A549 (cell line): ENCODE measurements at regions of chr1 and their contacts with region 1.

Region 1: DNA sequence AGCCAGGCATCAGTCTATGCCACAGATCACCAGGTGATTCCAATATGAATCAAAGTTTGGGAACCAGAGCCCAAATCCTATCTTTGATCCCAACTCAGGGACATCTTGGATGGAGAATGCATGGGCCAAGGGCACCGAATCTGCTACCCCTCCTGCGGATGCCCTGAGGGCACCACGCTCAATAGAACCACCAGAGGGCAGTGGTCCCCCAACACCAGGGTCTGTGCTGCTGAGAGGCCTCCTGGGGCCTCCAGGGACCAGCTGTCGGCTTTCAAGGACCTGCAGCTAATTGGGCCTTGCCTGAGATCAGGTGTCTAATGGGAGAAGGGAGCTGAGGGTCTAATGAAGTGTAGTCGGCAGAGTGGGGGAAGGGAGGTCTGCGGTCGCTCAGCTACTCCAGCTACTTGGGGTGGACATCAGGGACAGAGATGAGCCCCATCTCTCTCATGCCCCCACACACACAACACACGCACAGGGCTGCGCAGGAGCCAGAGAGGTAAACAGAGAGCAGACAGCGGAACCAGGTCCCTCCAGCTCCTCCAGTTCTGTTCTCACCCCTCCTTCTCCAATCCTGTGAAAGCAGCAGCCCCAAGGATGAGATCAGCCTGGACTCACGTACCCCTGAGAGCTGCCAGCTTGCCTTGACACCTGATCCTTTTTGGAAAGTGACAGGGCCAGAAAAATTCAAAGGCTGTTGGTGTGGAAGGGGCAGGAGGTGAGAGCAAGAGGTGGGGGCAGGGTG is 34.9 kb upstream of the PPP1R15B start:
- DNase-seq: peak; percentile 59 to 81
- ATAC-seq: peak; percentile 86 to 88
- H3K4me3 ChIP-seq: no peak overlapping the region
- H3K27ac ChIP-seq: no peak overlapping the region
- H3K4me1 ChIP-seq: peaks cover 41% of the 10 kb centered on the region
- CTCF ChIP-seq: peak; percentile 57
- EP300 ChIP-seq: no peak
- POLR2A ChIP-seq: no peak
- RAD21 ChIP-seq: peak; percentile 66 to 71

Region 2: GRCh38 chr1:204417231-204417997 is 29.1 kb before region 1 on chr1:
- CTCF ChIA-PET with region 1: interaction called, 18 read pairs
- POLR2A ChIA-PET with region 1: interaction called, 5 read pairs
- DNase-seq: peak; percentile 94 to 97
- ATAC-seq: peak; percentile 91 to 96
- H3K4me3 ChIP-seq: peak overlapping the region; percentile 42
- H3K27ac ChIP-seq: peak overlapping the region; percentile 98 to 100
- H3K4me1 ChIP-seq: peaks cover 76% of the 10 kb centered on the region
- CTCF ChIP-seq: no peak
- EP300 ChIP-seq: peak in 1 of 2 experiments; percentile 38; a peak in 2 of 5 replicates
- POLR2A ChIP-seq: no peak
- RAD21 ChIP-seq: no peak

Region 3: GRCh38 chr1:204465546-204466415 is 19.2 kb after region 1 on chr1:
- CTCF ChIA-PET with region 1: interaction called, 74 read pairs
- POLR2A ChIA-PET with region 1: no interaction called
- DNase-seq: no peak
- ATAC-seq: no peak
- H3K4me3 ChIP-seq: no peak overlapping the region
- H3K27ac ChIP-seq: no peak overlapping the region
- H3K4me1 ChIP-seq: no peaks in the 10 kb centered on the region
- CTCF ChIP-seq: no peak
- EP300 ChIP-seq: no peak
- POLR2A ChIP-seq: no peak
- RAD21 ChIP-seq: no peak

Region 4: GRCh38 chr1:204487256-204487615 is 40.7 kb after region 1 on chr1:
- CTCF ChIA-PET with region 1: interaction called, 530 read pairs
- POLR2A ChIA-PET with region 1: no interaction called
- DNase-seq: no peak
- ATAC-seq: no peak
- H3K4me3 ChIP-seq: no peak overlapping the region
- H3K27ac ChIP-seq: no peak overlapping the region
- H3K4me1 ChIP-seq: peaks cover 28% of the 10 kb centered on the region
- CTCF ChIP-seq: no peak
- EP300 ChIP-seq: no peak
- POLR2A ChIP-seq: no peak
- RAD21 ChIP-seq: no peak

Region 5: DNA sequence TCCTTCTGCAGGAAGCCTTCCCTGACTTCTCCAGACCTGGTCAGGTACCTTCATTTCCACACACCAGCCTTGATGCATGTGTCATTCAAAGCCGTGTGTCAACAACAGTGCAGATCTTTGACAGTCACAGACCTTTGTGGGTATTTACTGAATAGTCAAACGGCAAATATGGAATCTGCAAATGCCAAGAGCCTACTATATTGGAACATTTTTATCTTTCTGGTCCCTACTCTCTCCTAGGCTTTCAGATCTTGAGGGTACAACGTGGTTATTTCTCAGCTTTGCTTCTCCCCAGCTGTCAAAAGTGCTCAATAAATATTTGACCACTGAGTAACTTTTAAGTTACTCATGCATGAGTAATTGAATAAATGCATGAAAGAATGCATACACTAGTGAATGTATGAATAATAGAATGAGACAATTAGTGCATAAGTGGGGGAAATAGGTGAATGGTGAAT is 145.1 kb after region 1 on chr1:
- CTCF ChIA-PET with region 1: no interaction called
- POLR2A ChIA-PET with region 1: no interaction called
- DNase-seq: no peak
- ATAC-seq: peak; percentile 48 to 74; a peak in 3 of 6 replicates
- H3K4me3 ChIP-seq: no peak overlapping the region
- H3K27ac ChIP-seq: no peak overlapping the region
- H3K4me1 ChIP-seq: peaks cover 15% of the 10 kb centered on the region; the same call in 2 of the 3 replicates
- CTCF ChIP-seq: no peak
- EP300 ChIP-seq: no peak
- POLR2A ChIP-seq: no peak
- RAD21 ChIP-seq: no peak; a peak in 1 of 5 replicates